Cardiac septum (tissue), 1 donor: ENCODE measurements at regions of chr3 and their contacts with region 1.

Region 1: DNA sequence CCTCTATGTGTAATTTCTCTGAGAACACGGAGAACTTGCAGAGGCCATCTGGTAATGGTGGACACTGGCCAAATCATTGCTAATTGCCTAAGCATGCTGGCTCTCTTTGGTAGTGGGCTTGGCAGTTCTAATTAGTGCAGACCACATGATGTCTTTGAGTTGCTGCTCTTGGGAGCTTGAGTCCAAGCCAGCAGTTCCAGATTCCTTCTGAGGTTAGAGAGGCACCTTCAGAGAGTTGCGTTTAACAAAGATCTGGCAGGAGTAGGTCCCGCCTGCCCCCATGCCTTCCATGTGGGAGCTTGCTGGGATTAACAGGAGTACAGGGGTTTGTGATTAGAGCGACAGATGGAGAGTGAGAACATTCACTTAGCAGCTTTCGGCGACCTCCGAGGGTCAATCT is 449.0 kb upstream of the LMCD1 start:
- DNase-seq: no peak

Region 2: GRCh38 chr3:8001712-8002111 is 50.9 kb before region 1 on chr3:
- intact Hi-C with region 1: loop called (anchors 5 kb)
- DNase-seq: no peak

Region 3: GRCh38 chr3:8186213-8186612 is 133.6 kb after region 1 on chr3:
- intact Hi-C with region 1: no loop called
- DNase-seq: no peak

Region 4: GRCh38 chr3:8317661-8318649 is 265.3 kb after region 1 on chr3:
- intact Hi-C with region 1: no loop called
- DNase-seq: no peak